ENCODE measurements at regions of chr9 and their contacts with region 1.

Region 1: GRCh38 chr9:99819856-99820684 is 1.6 kb upstream of the NR4A3 start:
- DNase-seq: peak; percentile 93 to 98
- H3K4me3 ChIP-seq: peak overlapping the region; percentile 81 to 82
- H3K27ac ChIP-seq: peak overlapping the region; percentile 98 to 99
- H3K4me1 ChIP-seq: peaks cover 8 to 24% of the 10 kb centered on the region in 2 donors
- H3K27me3 ChIP-seq: no peaks in the 10 kb centered on the region
- CTCF ChIP-seq: no peak

Region 2: DNA sequence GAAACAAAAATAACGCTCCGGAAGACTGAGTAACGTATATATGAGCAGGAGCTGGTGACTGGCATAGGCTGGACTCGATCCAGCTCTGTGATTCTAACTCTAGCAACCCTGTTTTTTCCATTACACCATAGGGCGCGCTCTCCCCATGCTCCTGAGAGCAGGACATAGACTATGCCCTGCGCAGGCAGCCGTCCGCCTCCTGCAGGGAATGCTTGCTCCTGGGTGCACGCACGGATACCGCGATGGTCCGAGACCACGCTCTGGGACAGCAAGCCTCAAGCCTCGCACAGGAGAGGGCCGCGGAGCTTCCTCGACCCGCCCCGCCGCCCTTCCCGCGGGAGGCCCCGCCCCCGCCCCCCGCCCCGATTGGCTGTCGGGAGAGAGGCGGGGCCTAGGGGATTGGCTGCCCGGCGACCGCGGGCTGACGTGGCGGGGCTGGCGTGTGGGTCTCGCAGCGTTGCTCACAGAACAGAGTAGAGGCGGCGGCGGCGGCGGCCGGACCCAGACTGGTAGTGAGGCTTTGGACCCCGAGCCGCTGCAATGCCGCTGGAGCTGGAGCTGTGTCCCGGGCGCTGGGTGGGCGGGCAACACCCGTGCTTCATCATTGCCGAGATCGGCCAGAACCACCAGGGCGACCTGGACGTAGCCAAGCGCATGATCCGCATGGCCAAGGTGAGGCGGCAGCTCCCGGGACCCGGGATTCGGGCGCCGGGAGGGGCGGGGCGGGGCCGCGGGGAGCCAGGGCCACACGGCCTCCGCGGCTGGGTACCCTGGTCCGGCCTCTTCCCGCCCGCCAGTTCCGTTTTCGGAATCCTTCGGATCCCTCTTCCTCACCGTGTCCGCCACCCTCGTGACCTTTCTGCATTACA is 1763.6 kb before region 1 on chr9 and contains the start of gene NANS:
- intact Hi-C with region 1: loop called (anchors 5 kb)
- DNase-seq: peak; percentile 80 to 96
- H3K4me3 ChIP-seq: peak within 1 kb of the TSS; percentile 86 to 96
- H3K27ac ChIP-seq: peak within 1 kb of the TSS; percentile 95 to 98
- H3K4me1 ChIP-seq: peaks cover 0 to 10% of the 10 kb centered on the region in 2 donors
- H3K27me3 ChIP-seq: no peaks in the 10 kb centered on the region
- CTCF ChIP-seq: no peak
- total RNA-seq, gene NANS: 40.7 TPM

Region 3: DNA sequence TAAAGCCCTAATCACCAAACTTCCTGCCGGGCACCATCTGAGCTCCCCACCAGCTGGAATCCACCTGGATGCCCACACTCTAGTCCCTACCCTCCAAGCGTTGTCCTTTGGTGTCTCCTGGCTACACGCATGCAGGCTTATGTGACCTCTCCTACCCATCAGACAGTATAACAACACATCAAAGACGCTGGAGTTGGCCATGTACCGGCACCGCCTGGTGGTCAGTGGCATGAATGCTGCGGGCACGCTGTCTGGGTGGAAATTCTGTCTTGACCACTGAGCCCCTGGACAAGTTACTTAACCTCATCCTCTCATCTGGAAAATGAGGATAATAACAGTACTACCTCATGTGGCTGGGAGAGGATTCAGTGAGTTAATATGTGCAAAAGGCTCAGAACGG is 1604.2 kb before region 1 on chr9:
- intact Hi-C with region 1: no loop called
- DNase-seq: no peak
- H3K4me3 ChIP-seq: no peak overlapping the region
- H3K27ac ChIP-seq: no peak overlapping the region
- H3K4me1 ChIP-seq: no peaks in the 10 kb centered on the region
- H3K27me3 ChIP-seq: no peaks in the 10 kb centered on the region
- CTCF ChIP-seq: peak in 1 of 3 experiments; percentile 22

Region 4: DNA sequence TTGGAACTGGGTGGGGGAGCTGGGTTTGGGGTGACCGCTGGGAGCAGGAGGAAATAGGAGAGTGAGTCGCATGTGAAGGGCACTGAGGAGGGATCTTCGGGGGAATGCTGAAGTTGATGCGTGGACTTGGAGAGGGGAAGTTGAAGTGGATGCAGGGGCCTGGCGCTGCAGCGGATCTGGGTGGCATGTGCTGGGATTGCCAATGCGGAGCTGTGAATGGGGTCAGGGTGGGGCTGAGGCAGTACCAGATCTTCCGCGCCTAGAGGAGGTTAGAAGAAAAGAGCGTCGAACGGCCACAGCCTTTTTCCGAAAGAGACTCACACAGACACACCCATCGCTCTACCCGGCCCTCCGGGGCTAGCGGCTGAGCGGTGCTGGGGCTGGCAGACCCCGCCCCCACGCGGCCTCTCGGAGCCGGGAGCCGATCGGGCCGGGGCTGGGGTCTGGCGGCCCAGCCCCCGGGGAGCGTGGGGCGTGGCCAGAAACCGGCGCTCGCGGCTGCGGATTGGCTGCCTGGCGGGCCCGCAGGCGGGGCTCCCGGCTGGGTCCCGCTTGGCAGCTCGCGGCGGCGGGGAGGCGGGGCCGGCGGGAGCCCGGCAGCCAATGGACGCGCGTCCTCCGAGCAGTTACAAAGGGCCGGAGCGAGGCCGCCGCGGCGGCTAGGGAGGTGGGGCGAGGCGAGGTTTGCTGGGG is 715.5 kb before region 1 on chr9 and contains the start of gene TGFBR1:
- intact Hi-C with region 1: loop called (anchors 2 kb)
- DNase-seq: peak; percentile 72 to 97
- H3K4me3 ChIP-seq: peak within 1 kb of the TSS; percentile 82 to 87
- H3K27ac ChIP-seq: peak within 1 kb of the TSS; percentile 92 to 95
- H3K4me1 ChIP-seq: peaks cover 0 to 34% of the 10 kb centered on the region in 2 donors
- H3K27me3 ChIP-seq: no peaks in the 10 kb centered on the region
- CTCF ChIP-seq: no peak
- total RNA-seq, gene TGFBR1: 13.9 TPM

Region 5: GRCh38 chr9:99368341-99369323 is 451.4 kb before region 1 on chr9:
- intact Hi-C with region 1: loop called (anchors 10 kb)
- DNase-seq: peak; percentile 51 to 88
- H3K4me3 ChIP-seq: peak overlapping the region; percentile 56 to 77
- H3K27ac ChIP-seq: peak overlapping the region; percentile 90 to 95
- H3K4me1 ChIP-seq: peaks cover 0 to 8% of the 10 kb centered on the region in 2 donors
- H3K27me3 ChIP-seq: no peaks in the 10 kb centered on the region
- CTCF ChIP-seq: no peak

Region 6: GRCh38 chr9:99595796-99596195 is 224.3 kb before region 1 on chr9:
- intact Hi-C with region 1: no loop called
- DNase-seq: no peak
- H3K4me3 ChIP-seq: no peak overlapping the region
- H3K27ac ChIP-seq: no peak overlapping the region
- H3K4me1 ChIP-seq: no peaks in the 10 kb centered on the region
- H3K27me3 ChIP-seq: no peaks in the 10 kb centered on the region
- CTCF ChIP-seq: no peak

Region 7: DNA sequence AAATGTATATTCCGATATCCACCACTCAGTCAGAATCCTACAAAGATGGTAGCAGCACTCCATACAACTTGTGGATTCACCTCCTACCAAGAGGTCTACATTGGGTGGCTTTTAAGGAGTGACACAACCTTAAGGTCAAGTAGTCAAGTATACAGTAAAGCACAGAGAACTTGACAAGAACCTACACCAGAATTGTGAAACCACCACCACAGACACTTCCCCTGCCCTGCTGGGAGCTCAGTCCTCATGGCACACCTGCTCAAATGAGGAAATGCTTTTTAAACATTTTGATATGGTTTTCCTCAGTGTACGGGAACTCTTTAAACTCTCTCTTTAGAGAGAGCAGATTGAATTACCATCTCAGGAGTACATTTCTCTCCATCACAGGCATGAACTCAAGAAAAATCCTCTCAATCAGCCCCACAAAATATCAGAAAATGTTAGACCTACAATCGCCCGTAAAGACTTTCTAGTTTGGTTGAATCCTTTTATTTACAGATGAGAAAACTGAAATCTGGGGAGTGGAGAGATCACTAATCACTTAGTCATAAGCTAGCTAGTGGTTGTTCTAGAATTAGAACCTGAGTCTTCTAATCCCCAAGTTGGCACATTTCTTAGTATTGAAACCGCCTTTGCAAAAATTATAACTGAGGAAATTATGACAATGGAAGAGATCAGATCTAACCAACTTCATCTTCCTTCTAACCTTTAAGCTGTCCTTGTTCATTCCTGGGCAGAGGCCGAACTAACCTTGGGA is 36.9 kb before region 1 on chr9:
- intact Hi-C with region 1: no loop called
- DNase-seq: no peak
- H3K4me3 ChIP-seq: no peak overlapping the region
- H3K27ac ChIP-seq: no peak overlapping the region
- H3K4me1 ChIP-seq: no peaks in the 10 kb centered on the region
- H3K27me3 ChIP-seq: no peaks in the 10 kb centered on the region
- CTCF ChIP-seq: no peak

Region 8: DNA sequence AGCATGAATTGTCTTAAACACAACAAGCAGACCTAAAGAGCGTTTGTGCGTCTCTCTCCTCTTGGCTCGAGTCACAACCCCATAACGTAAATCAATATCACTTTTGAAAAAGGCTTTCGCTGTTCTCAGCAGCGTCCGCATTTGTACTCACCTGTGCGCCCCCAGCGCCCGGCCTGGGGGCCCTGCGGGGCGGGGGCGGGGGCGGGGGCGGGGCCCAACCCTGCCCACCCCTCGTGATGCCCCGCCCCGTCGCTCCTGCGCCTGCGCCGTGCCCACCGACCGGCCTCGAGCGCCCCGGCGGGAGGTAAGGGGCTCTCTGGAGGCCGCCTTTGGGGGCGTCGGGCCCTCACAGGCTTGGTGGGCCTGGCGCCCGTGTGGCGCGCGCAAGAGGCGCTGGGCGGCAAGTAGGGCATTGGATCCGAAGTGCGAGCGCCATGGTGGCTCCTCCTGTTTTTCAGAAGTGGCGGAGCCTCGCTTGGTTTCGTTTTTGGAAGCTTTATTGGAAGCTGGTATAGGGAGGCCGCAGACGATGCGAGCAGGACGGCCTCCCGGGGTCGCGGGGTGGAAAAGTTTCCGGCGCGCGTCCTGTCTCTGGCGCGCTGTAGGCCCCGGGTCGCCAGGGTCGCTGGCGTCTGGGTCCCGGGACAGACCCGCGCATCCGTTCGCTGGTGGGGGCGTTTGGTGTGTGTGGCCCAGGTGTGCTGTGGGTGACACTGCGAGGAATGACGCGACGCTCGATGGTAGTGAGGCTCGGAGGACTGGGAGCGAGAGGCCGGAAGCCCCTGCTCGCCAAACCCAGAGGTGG is 86.5 kb after region 1 on chr9 and contains the start of gene STX17:
- intact Hi-C with region 1: loop called (anchors 1 kb)
- DNase-seq: peak; percentile 21 to 80
- H3K4me3 ChIP-seq: peak within 1 kb of the TSS; percentile 74 to 99
- H3K27ac ChIP-seq: peak within 1 kb of the TSS; percentile 91 to 97
- H3K4me1 ChIP-seq: no peaks in the 10 kb centered on the region
- H3K27me3 ChIP-seq: no peaks in the 10 kb centered on the region
- CTCF ChIP-seq: peak in 2 of 3 experiments; percentile 3 to 6
- total RNA-seq, gene STX17: 24.9 TPM

Region 9: GRCh38 chr9:100411472-100412283 is 591.6 kb after region 1 on chr9:
- intact Hi-C with region 1: loop called (anchors 5 kb)
- DNase-seq: peak; percentile 44 to 94
- H3K4me3 ChIP-seq: peak overlapping the region; percentile 60 to 78
- H3K27ac ChIP-seq: no peak overlapping the region
- H3K4me1 ChIP-seq: no peaks in the 10 kb centered on the region
- H3K27me3 ChIP-seq: no peaks in the 10 kb centered on the region
- CTCF ChIP-seq: no peak

Region 10: DNA sequence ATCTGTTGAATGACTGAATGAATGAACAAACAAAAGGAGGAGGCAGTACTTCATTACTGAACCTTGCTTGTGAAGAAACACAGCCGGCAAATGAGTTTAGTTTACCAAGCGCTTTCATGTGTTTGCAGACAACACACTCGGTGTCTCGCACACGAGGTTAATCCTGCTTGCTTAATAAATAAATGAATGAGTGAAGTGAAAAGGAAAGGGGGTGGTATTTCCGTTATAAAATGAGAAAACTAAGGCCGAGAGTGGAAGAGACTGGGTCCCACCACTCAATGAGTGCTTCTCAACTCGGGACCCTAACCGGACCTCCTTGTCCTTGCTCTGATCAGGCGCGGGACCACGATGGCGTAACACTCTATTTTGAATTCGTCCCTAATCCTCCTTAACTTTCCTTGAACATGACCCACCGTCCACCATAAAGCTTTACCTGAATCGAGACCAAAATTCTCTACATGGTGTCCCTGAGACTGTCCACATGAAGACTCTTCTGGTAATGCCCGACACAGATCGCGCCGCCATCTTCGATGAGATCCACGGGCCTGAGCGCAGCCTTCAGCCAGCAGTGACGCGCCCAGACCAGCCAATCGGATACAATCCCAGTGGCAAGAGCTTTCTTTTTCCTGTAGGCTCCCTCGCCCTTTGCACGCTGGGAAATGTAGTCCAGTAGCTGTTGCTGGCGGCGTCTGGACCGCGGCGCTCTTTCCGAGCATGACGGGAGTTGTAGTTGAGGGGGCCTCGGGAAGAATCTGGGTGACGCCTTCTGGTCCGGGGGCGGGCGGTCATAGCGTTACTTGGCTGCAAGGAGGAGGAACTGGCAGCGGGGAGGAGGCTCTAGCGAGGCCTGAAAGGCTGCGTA is 1578.2 kb after region 1 on chr9 and contains the starts of genes MRPL50 and ZNF189:
- intact Hi-C with region 1: loop called (anchors 5 kb)
- DNase-seq: peak; percentile 98 to 99
- H3K4me3 ChIP-seq: peak within 1 kb of the TSS; percentile 67 to 91
- H3K27ac ChIP-seq: peak within 1 kb of the TSS; percentile 77
- H3K4me1 ChIP-seq: peaks cover 0 to 15% of the 10 kb centered on the region in 2 donors
- H3K27me3 ChIP-seq: no peaks in the 10 kb centered on the region
- CTCF ChIP-seq: no peak
- total RNA-seq, gene MRPL50: 2.6 TPM
- total RNA-seq, gene ZNF189: 30.4 TPM